Activated T-helper 1 cell treated with anti-CD3 and anti-CD28 coated beads, Interleukin-12 subunit alpha, Interleukin-12 subunit beta, Interleukin-2, Interleukin-4 antibody, amounts not matched to agents 30 ng/mL and 10 ng/mL and 1 ng/mL, durations not matched to agents 14 hours and 24 hours and 36 hours (primary cell): ENCODE measurements at regions of chr6 and their contacts with region 1.

Region 1: DNA sequence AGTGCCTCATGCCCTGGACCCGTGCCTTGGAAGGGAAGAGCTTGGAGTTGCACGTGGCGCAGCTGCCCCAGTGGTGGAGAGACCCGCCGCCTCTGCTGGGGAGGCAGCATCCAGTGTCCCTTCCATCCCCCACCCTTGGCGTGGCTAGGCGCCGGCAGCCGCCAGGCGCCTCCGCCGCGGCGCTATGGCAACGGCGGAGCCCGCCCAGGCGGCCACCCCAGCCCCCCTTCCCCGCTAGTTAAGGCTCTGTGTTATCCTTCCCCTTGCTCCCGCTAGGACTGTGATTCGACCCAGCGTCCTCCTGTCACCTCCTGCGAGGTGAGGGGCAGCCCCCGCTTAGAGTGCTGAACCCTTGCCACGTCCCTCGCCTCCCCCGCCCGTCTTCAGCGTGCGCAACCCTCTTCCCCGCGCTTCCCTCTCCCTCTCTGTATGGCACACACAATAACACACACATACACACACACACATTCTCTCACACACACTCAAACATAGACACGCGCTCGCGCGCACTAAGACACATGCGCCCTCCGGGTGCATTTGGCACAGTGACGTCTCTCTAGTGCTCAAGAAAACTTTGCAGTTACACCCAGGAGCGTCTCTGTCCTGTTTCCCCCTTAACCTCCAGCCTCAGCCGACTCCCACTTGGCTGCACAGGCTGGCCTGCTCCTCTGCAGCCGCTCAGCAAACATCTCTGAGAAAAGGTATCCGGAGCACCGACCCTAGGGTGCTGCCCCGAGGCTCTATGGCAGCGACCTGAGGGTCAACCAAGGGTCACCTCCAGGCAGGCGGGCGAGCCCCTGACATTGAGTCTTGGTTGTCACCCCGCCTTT is 8.5 kb downstream of the GRIK2 start:
- DNase-seq: no peak
- H3K4me3 Mint-ChIP-seq: no peak overlapping the region
- H3K27ac Mint-ChIP-seq: peak overlapping the region; percentile 37
- H3K4me1 Mint-ChIP-seq: no peaks in the 10 kb centered on the region
- H3K27me3 Mint-ChIP-seq: peaks cover 44% of the 10 kb centered on the region

Region 2: GRCh38 chr6:100464903-100465700 is 936.9 kb before region 1 on chr6 and contains the start of gene SIM1:
- intact Hi-C with region 1: loop called (anchors 5 kb)
- DNase-seq: no peak
- H3K4me3 Mint-ChIP-seq: no peak within 1 kb of the TSS
- H3K27ac Mint-ChIP-seq: peak within 1 kb of the TSS; percentile 67
- H3K4me1 Mint-ChIP-seq: peaks cover 12% of the 10 kb centered on the region
- H3K27me3 Mint-ChIP-seq: peaks cover 84% of the 10 kb centered on the region
- total RNA-seq, gene SIM1: 0.02 and 0.13 TPM in 2 replicates

Region 3: GRCh38 chr6:101344885-101345284 is 57.1 kb before region 1 on chr6:
- intact Hi-C with region 1: no loop called
- DNase-seq: no peak
- H3K4me3 Mint-ChIP-seq: no peak overlapping the region
- H3K27ac Mint-ChIP-seq: no peak overlapping the region
- H3K4me1 Mint-ChIP-seq: no peaks in the 10 kb centered on the region
- H3K27me3 Mint-ChIP-seq: no peaks in the 10 kb centered on the region